Sigmoid colon (tissue), 7 donors: ENCODE measurements at regions of chr1 and their contacts with region 1.

Region 1: DNA sequence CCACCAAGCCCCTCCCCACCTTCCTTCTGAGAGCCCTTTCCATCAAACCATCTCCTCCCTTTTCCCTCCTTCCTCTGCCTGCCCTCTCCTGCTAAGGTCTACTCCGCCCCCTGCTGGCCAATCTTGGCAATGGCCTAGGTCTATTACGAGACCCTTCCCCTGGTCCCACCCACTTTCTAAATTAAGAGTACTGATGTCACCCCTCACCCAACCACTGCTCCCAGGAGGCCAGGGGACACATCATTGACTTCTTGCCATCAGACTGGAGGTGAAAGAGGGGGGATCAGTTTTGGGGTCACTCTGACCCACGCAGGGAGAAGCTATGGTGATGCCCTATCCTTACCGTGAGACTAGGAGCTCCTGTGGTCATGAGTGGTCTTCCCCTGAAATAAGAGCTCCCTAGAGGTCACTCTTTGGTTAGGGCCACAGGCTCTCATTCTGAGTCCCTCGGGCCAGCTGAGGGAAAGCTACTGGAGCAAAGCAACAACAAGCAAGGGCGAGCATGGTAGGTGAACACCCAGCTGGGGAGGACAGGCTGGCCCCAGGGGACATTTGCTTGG is 34.6 kb upstream of the S100A7 start:
- DNase-seq: peak; percentile 84
- H3K4me3 ChIP-seq: no peak overlapping the region
- H3K27ac ChIP-seq: no peak overlapping the region
- H3K4me1 ChIP-seq: peaks cover 0 to 37% (median 24%) of the 10 kb centered on the region in 4 donors
- H3K27me3 ChIP-seq: no peaks in the 10 kb centered on the region
- CTCF ChIP-seq: peak; percentile 94 to 99 (median 96)
- EP300 ChIP-seq: no peak
- POLR2A ChIP-seq: no peak

Region 2: GRCh38 chr1:153352523-153352922 is 142.5 kb before region 1 on chr1:
- intact Hi-C with region 1: loop called (anchors 1 kb)
- DNase-seq: peak; percentile 84
- H3K4me3 ChIP-seq: no peak overlapping the region
- H3K27ac ChIP-seq: no peak overlapping the region
- H3K4me1 ChIP-seq: no peaks in the 10 kb centered on the region
- H3K27me3 ChIP-seq: peaks cover 0 to 32% (median 0%) of the 10 kb centered on the region in 3 donors
- CTCF ChIP-seq: peak; percentile 67 to 87 (median 82)
- EP300 ChIP-seq: no peak
- POLR2A ChIP-seq: no peak

Region 3: GRCh38 chr1:153459655-153460054 is 35.4 kb before region 1 on chr1:
- intact Hi-C with region 1: loop called (anchors 5 kb)
- DNase-seq: no peak
- H3K4me3 ChIP-seq: no peak overlapping the region
- H3K27ac ChIP-seq: no peak overlapping the region
- H3K4me1 ChIP-seq: no peaks in the 10 kb centered on the region
- H3K27me3 ChIP-seq: peaks cover 0 to 2% (median 0%) of the 10 kb centered on the region in 3 donors
- CTCF ChIP-seq: no peak
- EP300 ChIP-seq: no peak
- POLR2A ChIP-seq: no peak